ENCODE measurements at regions of chr3 and their contacts with region 1.

Region 1: GRCh38 chr3:150408221-150409102 is at the start of gene TSC22D2:
- DNase-seq: peak; percentile 96 to 98
- ATAC-seq: peak; percentile 86 to 93 (median 87)
- H3K4me3 ChIP-seq: peak within 1 kb of the TSS; percentile 78 to 92 (median 86)
- H3K27ac ChIP-seq: peak within 1 kb of the TSS; percentile 98 to 100 (median 100)
- H3K4me1 ChIP-seq: peaks cover 0 to 38% (median 25%) of the 10 kb centered on the region in 9 donors
- H3K27me3 ChIP-seq: no peaks in the 10 kb centered on the region
- CTCF ChIP-seq: peak in 6 of 9 donors; percentile 10 to 47 (median 32)
- total RNA-seq, gene TSC22D2: 17.2 to 73.1 (median 38.9) TPM

Region 2: DNA sequence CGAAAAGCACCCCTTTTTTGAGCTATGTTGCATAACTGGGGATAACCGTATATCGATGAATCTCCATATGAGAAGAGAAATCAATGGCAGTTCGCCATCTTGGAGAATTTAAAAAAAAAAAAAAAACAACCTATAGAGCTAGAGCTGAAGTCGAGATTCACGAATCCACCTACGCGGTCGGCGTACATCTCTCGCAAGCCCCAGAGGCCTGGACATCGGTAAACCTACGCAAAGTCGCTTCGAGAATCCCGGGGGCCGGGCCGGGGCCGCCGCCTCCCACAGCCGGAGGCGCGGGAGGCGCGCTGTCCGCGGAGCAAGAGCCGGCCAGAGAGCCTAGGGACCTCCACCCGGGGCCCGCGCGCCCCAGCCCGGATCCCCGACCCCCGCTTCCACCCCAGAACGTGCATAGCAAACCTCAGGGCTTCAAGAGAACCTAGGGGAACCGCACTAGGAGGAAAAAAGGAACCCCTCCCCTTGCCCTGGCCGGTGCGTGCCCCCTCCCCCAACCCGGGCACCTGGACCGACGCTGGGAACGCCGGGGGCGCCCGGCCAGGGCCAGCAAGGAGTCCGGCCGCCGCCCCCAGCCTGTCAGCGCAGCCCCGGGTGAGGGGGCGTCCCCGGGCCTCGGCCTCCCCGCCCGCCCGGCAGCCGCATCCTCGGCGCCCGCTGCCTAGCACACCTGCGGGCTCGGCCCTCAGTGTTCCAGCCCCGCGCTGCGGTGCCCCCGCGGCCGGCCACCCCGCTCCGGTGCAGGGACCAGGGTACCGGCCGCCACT is 438.3 kb before region 1 on chr3:
- intact Hi-C with region 1: loop called in 1 of 10 experiments (anchors 10 kb)
- DNase-seq: peak; percentile 81 to 83
- ATAC-seq: peak; percentile 65 to 81 (median 78)
- H3K4me3 ChIP-seq: peak overlapping the region; percentile 77 to 98 (median 84)
- H3K27ac ChIP-seq: peak overlapping the region; percentile 64 to 96 (median 92)
- H3K4me1 ChIP-seq: peaks cover 0 to 45% (median 39%) of the 10 kb centered on the region in 9 donors
- H3K27me3 ChIP-seq: peaks cover 0 to 55% (median 0%) of the 10 kb centered on the region in 7 donors
- CTCF ChIP-seq: no peak

Region 3: GRCh38 chr3:150232992-150233451 is 175.4 kb before region 1 on chr3:
- intact Hi-C with region 1: loop called in 7 of 10 experiments (anchors 5 to 10 kb)
- DNase-seq: peak; percentile 77 to 82
- ATAC-seq: peak; percentile 78 to 98 (median 94)
- H3K4me3 ChIP-seq: no peak overlapping the region
- H3K27ac ChIP-seq: peak overlapping the region in 8 of 10 donors; percentile 7 to 56 (median 40)
- H3K4me1 ChIP-seq: peaks cover 0 to 48% (median 22%) of the 10 kb centered on the region in 9 donors
- H3K27me3 ChIP-seq: no peaks in the 10 kb centered on the region
- CTCF ChIP-seq: no peak

Region 4: GRCh38 chr3:150286390-150287147 is 121.9 kb before region 1 on chr3:
- intact Hi-C with region 1: loop called in 5 of 10 experiments (anchors 2 to 10 kb)
- DNase-seq: no peak
- ATAC-seq: peak in 6 of 8 donors; percentile 48 to 82 (median 75)
- H3K4me3 ChIP-seq: no peak overlapping the region
- H3K27ac ChIP-seq: no peak overlapping the region
- H3K4me1 ChIP-seq: peaks cover 0 to 2% (median 0%) of the 10 kb centered on the region in 9 donors
- H3K27me3 ChIP-seq: no peaks in the 10 kb centered on the region
- CTCF ChIP-seq: peak; percentile 33 to 70 (median 57)

Region 5: DNA sequence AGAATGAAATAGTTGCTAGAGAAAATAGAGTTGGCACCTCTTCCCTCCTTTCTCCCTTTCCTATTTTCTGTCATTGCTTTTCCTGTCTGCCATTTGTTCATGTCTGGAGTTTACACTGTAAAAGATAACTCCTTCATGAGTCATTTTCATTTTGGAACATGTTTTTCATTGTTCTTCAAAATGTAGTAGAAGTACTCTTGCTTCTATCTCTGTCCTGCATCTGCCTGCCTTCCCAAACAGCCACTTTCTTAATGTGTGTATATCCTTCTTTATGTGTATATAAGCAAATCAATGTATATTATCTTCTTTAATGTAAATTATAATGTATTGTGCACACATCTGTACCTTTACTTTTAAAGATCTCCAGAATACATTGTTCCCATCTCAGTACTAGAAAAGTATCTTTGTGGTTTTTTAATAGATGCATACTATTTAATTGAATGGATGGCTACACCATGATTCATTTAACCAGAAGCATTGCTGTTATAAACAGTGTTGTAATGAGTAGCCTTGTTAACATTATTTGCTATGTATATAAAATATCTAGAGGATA is 40.8 kb after region 1 on chr3:
- intact Hi-C with region 1: loop called in 1 of 10 experiments (anchors 5 kb)
- DNase-seq: no peak
- ATAC-seq: peak in 2 of 8 donors; percentile 25 to 27
- H3K4me3 ChIP-seq: no peak overlapping the region
- H3K27ac ChIP-seq: peak overlapping the region in 1 of 10 donors; percentile 32
- H3K4me1 ChIP-seq: peaks cover 6 to 84% (median 57%) of the 10 kb centered on the region in 9 donors
- H3K27me3 ChIP-seq: no peaks in the 10 kb centered on the region
- CTCF ChIP-seq: no peak

Region 6: GRCh38 chr3:150495563-150496168 is 87.2 kb after region 1 on chr3:
- intact Hi-C with region 1: loop called in 7 of 10 experiments (anchors 2 to 10 kb)
- DNase-seq: no peak
- ATAC-seq: peak in 2 of 8 donors; percentile 37 to 38
- H3K4me3 ChIP-seq: no peak overlapping the region
- H3K27ac ChIP-seq: no peak overlapping the region
- H3K4me1 ChIP-seq: peaks cover 0 to 10% (median 0%) of the 10 kb centered on the region in 9 donors
- H3K27me3 ChIP-seq: no peaks in the 10 kb centered on the region
- CTCF ChIP-seq: peak; percentile 60 to 90 (median 81)

Region 7: GRCh38 chr3:150850191-150850590 is 441.7 kb after region 1 on chr3:
- intact Hi-C with region 1: no loop called
- DNase-seq: no peak
- ATAC-seq: no peak
- H3K4me3 ChIP-seq: no peak overlapping the region
- H3K27ac ChIP-seq: no peak overlapping the region
- H3K4me1 ChIP-seq: no peaks in the 10 kb centered on the region
- H3K27me3 ChIP-seq: no peaks in the 10 kb centered on the region
- CTCF ChIP-seq: no peak

Measured in heart right ventricle (tissue), 16 donors.